Activated CD8-positive, alpha-beta memory T cell treated with anti-CD3 and anti-CD28 coated beads, Interleukin-2, amount 10 ng/mL, durations not matched to agents 7 days and 5 days (primary cell): ENCODE measurements at regions of chr11 and their contacts with region 1.

Region 1: GRCh38 chr11:83071567-83072349 is at the start of gene RAB30:
- DNase-seq: peak; percentile 98
- ATAC-seq: peak; percentile 98
- H3K4me3 Mint-ChIP-seq: no peak within 1 kb of the TSS
- H3K27ac Mint-ChIP-seq: no peak within 1 kb of the TSS
- H3K4me1 Mint-ChIP-seq: peaks cover 38% of the 10 kb centered on the region
- H3K27me3 Mint-ChIP-seq: no peaks in the 10 kb centered on the region
- total RNA-seq, gene RAB30: 7.0 to 7.7 TPM

Region 2: GRCh38 chr11:83087035-83087434 is 15.3 kb after region 1 on chr11:
- CTCF ChIA-PET with region 1: interaction called, 10 read pairs
- DNase-seq: no peak
- ATAC-seq: no peak
- H3K4me3 Mint-ChIP-seq: no peak overlapping the region
- H3K27ac Mint-ChIP-seq: no peak overlapping the region
- H3K4me1 Mint-ChIP-seq: peaks cover 5% of the 10 kb centered on the region
- H3K27me3 Mint-ChIP-seq: no peaks in the 10 kb centered on the region